ENCODE measurements at regions of chr12 and their contacts with region 1.

Region 1: DNA sequence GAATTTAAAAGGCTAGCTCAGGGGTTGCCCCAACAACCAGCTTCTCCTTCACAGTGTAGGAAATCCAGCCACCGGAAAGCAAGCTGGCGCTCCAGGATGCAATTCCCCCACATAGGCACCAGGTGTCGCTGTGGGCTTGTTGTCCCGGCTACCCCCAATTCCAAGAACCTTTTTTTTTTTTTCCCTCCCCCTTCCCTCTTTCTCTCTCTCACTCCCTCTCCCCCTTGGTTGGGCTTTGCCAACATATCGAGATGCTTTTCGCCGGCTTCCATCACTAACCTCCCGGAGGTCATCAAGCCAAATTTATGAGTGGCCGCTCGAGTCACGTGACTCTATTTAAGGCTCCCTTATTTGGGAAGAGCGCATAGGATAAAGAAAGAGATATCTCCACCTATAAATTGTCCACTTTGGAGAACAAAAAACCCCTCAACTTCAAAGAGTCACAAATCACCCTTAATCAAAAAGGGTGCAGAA is at the start of gene HOXC5:
- DNase-seq: peak; percentile 77
- ATAC-seq: no peak
- H3K4me3 Mint-ChIP-seq: peak within 1 kb of the TSS; percentile 31
- H3K27ac Mint-ChIP-seq: no peak within 1 kb of the TSS
- H3K4me1 Mint-ChIP-seq: peaks cover 18% of the 10 kb centered on the region
- H3K27me3 Mint-ChIP-seq: peaks cover 74% of the 10 kb centered on the region
- total RNA-seq, gene HOXC5: not detected

Region 2: DNA sequence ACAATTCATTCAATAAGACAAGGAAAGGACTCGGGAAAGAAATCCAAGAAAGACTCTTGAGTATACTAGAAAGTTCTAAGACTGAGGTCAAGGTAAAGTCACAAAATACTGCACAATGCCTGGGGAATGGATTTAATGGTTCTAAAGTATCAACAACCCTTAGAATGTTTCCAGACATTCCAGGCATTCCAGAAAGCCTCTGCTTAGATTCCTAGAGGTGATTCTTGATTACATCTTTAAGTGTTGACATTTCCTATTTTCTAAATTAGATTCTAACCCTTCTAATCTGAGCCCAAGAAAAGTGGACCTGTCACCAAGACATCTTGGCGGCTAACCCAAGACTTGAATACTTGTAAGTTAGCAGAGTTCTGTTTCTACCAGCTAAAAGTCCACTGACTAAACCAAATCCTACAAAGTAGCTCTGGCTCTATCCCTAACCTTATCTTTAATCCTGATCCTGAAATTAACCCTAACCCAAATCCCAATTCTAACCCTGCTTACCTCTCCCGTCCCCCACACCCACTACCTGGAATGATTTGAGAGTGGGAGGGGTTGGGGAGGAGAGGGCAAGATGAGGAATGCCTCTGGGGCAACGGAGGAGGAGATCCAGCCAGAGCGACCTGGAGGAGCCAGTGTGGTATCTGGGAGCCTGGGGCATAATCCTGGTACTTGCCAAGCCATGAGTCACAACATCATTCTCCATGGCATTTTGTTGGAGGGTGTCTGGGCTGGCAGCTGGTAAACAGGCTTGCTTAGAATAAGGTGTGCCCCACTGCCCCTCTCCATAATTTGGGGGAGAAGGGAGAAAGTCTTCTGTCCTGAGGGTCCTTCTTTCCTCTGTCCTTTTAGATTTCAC is 187.4 kb before region 1 on chr12:
- CTCF ChIA-PET with region 1: no interaction called
- POLR2A ChIA-PET with region 1: no interaction called
- DNase-seq: no peak
- ATAC-seq: no peak
- H3K4me3 Mint-ChIP-seq: no peak overlapping the region
- H3K27ac Mint-ChIP-seq: no peak overlapping the region
- H3K4me1 Mint-ChIP-seq: no peaks in the 10 kb centered on the region
- H3K27me3 Mint-ChIP-seq: peaks cover 46% of the 10 kb centered on the region

Region 3: GRCh38 chr12:53887006-53887405 is 145.7 kb before region 1 on chr12:
- CTCF ChIA-PET with region 1: no interaction called
- POLR2A ChIA-PET with region 1: no interaction called
- DNase-seq: no peak
- ATAC-seq: no peak
- H3K4me3 Mint-ChIP-seq: no peak overlapping the region
- H3K27ac Mint-ChIP-seq: no peak overlapping the region
- H3K4me1 Mint-ChIP-seq: no peaks in the 10 kb centered on the region
- H3K27me3 Mint-ChIP-seq: peaks cover 54% of the 10 kb centered on the region

Region 4: DNA sequence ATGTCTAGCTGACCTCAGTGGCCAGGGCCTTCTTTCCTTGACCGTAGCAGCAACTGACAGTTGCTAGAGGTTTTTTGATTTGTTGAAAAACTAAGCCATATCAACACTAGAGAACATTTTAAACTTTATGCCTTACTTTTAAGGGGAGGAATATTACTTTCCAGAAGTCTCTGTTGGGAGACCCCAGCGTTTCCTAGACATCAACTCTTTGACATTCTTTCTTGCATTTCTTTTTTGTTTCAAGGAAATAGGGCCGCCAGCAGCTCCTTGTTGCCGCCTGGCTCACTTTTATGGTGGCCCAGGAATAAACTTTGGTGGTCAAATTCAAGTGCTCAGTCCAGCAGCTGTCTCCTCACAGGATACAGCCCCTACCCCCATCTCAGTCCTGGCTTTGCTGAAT is 62.2 kb before region 1 on chr12:
- CTCF ChIA-PET with region 1: no interaction called
- POLR2A ChIA-PET with region 1: no interaction called
- DNase-seq: no peak
- ATAC-seq: no peak
- H3K4me3 Mint-ChIP-seq: no peak overlapping the region
- H3K27ac Mint-ChIP-seq: no peak overlapping the region
- H3K4me1 Mint-ChIP-seq: peaks cover 18% of the 10 kb centered on the region
- H3K27me3 Mint-ChIP-seq: peaks cover 91% of the 10 kb centered on the region

Region 5: GRCh38 chr12:53995378-53996239 is 37.1 kb before region 1 on chr12:
- CTCF ChIA-PET with region 1: interaction called, 16 read pairs
- POLR2A ChIA-PET with region 1: no interaction called
- DNase-seq: no peak
- ATAC-seq: peak; percentile 28
- H3K4me3 Mint-ChIP-seq: peak overlapping the region; percentile 72
- H3K27ac Mint-ChIP-seq: no peak overlapping the region
- H3K4me1 Mint-ChIP-seq: peaks cover 27% of the 10 kb centered on the region
- H3K27me3 Mint-ChIP-seq: peaks cover 93% of the 10 kb centered on the region

Region 6: DNA sequence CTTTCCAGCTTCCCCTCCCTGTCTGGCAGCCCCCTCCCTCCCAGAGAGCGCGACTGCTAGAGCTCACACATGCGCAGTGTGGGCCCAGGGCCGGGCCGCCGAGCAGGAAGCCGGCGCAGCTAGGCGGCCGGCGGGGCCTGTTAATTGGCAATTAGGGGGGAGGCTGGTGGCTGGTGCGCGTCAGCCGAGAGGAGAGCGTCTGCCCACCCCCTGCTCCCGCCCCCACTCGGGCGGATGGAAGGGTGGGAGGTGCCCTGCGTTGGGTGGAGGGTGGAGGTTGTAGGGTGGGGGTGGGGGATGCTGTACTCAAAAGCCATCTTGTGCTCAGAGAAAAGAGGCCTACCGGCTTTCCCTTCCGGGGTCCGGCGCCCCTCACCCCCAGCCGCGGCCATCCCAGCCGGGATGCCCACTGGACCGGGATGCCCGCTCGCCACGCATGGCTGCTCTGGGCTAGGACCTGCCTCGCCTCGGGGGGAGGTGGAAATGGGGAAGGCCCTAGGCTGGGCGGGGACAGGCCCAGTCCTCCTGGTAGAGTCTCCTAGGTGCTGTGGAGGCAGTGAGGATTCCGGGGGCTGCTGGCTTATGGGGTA is 14.7 kb before region 1 on chr12:
- CTCF ChIA-PET with region 1: interaction called, 18 read pairs
- POLR2A ChIA-PET with region 1: interaction called, 6 read pairs
- DNase-seq: peak; percentile 83
- ATAC-seq: peak; percentile 91
- H3K4me3 Mint-ChIP-seq: peak overlapping the region; percentile 80
- H3K27ac Mint-ChIP-seq: peak overlapping the region; percentile 46
- H3K4me1 Mint-ChIP-seq: peaks cover 27% of the 10 kb centered on the region
- H3K27me3 Mint-ChIP-seq: peaks cover 80% of the 10 kb centered on the region

Region 7: GRCh38 chr12:54140588-54141388 is 108.1 kb after region 1 on chr12:
- CTCF ChIA-PET with region 1: interaction called, 15 read pairs
- POLR2A ChIA-PET with region 1: no interaction called
- DNase-seq: no peak
- ATAC-seq: no peak
- H3K4me3 Mint-ChIP-seq: no peak overlapping the region
- H3K27ac Mint-ChIP-seq: no peak overlapping the region
- H3K4me1 Mint-ChIP-seq: no peaks in the 10 kb centered on the region
- H3K27me3 Mint-ChIP-seq: peaks cover 31% of the 10 kb centered on the region

Region 8: GRCh38 chr12:54191550-54192022 is 158.9 kb after region 1 on chr12:
- CTCF ChIA-PET with region 1: interaction called, 248 read pairs
- POLR2A ChIA-PET with region 1: interaction called, 10 read pairs
- DNase-seq: peak; percentile 85
- ATAC-seq: peak; percentile 66
- H3K4me3 Mint-ChIP-seq: no peak overlapping the region
- H3K27ac Mint-ChIP-seq: no peak overlapping the region
- H3K4me1 Mint-ChIP-seq: peaks cover 24% of the 10 kb centered on the region
- H3K27me3 Mint-ChIP-seq: peaks cover 50% of the 10 kb centered on the region

Region 9: DNA sequence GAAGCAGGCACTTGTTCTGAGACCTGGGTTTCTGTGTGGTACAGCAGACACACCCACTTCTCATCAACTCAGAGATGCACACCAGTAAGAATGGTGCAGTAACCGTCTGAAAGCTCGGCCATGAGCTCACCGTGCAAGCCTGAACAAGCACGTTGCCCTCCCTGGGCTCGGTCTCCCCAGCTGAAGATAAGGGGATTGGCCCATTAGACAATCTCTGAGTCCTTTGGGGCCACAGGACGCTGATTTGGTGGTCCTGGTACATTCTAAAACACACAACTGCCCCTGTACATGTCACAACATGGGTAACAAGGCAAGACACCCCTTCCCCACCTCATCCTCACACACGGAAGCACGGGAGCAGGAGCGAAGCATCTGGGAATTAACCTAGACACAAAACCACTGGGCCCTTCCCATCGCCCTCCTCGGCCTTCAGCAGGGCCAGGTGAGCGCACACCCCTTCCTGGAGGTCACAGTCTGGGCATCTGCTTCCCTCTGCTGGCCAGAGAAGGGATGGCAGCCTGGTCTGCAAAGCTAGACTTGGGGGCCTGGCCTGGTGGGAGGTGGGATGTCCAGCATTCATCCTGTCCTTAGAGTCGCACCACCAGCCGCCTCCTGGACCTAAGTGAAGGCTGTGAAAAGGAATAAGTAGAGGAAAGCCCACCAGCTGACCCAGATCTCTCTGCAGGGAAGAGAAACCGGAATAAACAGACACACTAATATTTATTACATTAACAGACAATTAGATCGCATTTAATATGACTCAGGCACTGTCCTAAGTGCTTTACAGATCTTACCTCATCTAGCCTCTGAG is 175.0 kb after region 1 on chr12:
- CTCF ChIA-PET with region 1: interaction called, 74 read pairs
- POLR2A ChIA-PET with region 1: interaction called, 3 read pairs
- DNase-seq: peak; percentile 85
- ATAC-seq: peak; percentile 92
- H3K4me3 Mint-ChIP-seq: no peak overlapping the region
- H3K27ac Mint-ChIP-seq: no peak overlapping the region
- H3K4me1 Mint-ChIP-seq: peaks cover 4% of the 10 kb centered on the region
- H3K27me3 Mint-ChIP-seq: peaks cover 40% of the 10 kb centered on the region

Region 10: DNA sequence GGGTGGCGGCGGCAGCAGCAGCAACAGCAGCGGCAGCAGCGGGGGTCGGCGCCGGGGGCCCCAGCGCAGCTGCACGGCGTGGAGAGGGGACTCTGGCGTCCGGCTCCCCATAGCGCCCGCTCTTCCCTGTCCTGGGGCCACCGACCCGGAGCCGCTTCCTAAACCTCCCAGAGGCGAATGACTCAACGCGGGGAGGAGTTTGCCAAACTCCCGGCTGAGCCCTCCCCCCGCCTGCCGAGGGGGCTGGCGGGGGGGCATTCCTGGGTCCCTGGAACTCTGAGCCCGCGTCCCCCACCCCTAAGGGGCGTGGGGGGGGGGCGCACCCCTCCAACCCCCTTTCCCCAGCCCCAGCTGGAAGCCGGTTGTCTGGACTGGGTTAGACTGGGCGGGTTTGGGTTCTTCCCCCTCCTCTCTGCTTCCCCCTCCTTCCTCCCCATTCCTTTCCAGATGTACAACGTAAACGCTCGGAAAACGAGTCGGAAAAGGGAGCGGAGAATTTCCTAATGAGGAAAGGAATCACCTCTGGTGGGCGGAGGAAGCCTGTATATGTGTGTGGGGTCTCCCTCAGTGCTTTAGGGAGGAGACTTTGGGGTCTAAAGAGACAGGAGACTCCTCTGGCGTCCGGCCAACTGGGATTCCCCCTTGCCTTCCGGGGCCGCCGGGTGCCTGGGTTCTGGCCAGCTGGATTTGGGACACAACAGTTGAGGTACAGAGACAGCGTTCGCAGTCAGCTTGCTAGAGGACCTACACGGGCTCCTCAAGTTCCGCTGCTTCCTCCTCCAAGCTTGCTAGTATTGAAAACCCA is 386.6 kb after region 1 on chr12 and contains the start of gene ITGA5:
- CTCF ChIA-PET with region 1: no interaction called
- POLR2A ChIA-PET with region 1: no interaction called
- DNase-seq: no peak
- ATAC-seq: peak; percentile 54
- H3K4me3 Mint-ChIP-seq: peak within 1 kb of the TSS; percentile 94
- H3K27ac Mint-ChIP-seq: peak within 1 kb of the TSS; percentile 91
- H3K4me1 Mint-ChIP-seq: peaks cover 54% of the 10 kb centered on the region
- H3K27me3 Mint-ChIP-seq: peaks cover 28% of the 10 kb centered on the region
- total RNA-seq, gene ITGA5: 65.0 to 69.1 TPM

Measured in activated CD8-positive, alpha-beta T cell treated with anti-CD3 and anti-CD28 coated beads, Interleukin-2, amount 10 ng/mL, durations not matched to agents 7 days and 5 days (primary cell).